IMR-90 (cell line): ENCODE measurements at regions of chr10 and their contacts with region 1.

Region 1: DNA sequence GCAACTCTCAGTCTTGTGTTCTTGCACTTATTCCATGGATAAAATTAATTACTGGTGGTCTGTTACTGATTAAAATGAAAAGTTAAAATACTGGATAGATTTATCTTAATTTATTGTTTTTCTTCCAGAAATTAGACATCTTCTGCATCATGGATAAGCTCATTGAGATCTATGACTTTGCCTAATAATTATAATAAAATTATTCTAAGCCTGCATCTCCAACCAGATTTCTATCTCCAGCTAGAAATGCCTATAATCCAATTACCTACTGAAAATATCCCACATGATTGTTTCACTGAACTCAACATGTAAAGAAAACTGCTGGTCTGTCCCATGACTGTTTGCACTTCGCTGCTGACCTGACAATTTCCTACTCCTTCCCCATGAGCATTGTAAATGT is 88.3 kb upstream of the ACBD5 start:
- DNase-seq: no peak
- ATAC-seq: no peak
- H3K4me3 ChIP-seq: no peak overlapping the region
- H3K27ac ChIP-seq: no peak overlapping the region
- H3K4me1 ChIP-seq: no peaks in the 10 kb centered on the region
- H3K27me3 ChIP-seq: no peaks in the 10 kb centered on the region
- CTCF ChIP-seq: no peak
- POLR2A ChIP-seq: no peak
- RAD21 ChIP-seq: no peak

Region 2: DNA sequence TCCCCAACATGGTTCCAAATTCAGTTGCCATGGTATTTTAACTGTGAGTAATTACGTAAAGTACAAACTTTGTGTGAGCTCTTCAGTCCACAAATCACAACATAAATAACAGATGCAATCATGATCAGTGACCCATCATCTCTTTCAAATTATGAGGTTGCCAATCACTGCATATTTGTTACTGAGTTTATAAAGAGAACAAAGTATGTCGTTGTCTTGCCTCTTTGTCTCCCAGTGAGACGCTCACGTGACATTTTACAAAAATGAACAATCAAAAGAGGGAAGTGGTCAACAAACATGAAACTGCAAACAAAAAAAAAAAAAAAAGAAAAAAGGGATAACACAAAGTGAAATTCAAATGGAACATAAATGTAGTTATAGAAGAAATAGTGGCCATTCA is 754.2 kb before region 1 on chr10:
- CTCF ChIA-PET with region 1: no interaction called
- POLR2A ChIA-PET with region 1: no interaction called
- dilution Hi-C with region 1: no loop called
- in situ Hi-C with region 1: no loop called
- intact Hi-C with region 1: loop called (anchors 5 kb)
- DNase-seq: no peak
- ATAC-seq: no peak
- H3K4me3 ChIP-seq: no peak overlapping the region
- H3K27ac ChIP-seq: no peak overlapping the region
- H3K4me1 ChIP-seq: no peaks in the 10 kb centered on the region
- H3K27me3 ChIP-seq: no peaks in the 10 kb centered on the region
- CTCF ChIP-seq: no peak
- POLR2A ChIP-seq: no peak
- RAD21 ChIP-seq: no peak

Region 3: DNA sequence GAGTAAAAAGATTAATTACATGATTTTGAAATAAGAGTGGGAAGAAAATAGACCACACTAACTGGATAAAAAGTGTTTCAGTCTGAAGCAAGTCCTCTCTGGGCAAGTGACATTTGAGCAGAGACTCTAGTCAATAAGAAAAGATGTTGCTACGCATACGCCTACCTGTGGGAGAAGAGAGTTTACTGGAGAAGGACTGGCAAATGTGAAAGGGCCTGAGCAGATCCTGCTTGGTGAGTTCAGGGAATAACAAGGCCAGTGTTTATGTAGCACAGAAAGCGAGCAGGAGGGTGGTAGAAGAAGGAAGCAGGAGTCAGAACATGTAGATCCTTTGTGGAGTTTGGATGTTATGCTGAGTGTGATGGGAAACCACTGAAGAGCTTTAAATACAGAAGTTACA is 218.5 kb after region 1 on chr10:
- CTCF ChIA-PET with region 1: no interaction called
- POLR2A ChIA-PET with region 1: no interaction called
- dilution Hi-C with region 1: no loop called
- in situ Hi-C with region 1: no loop called
- intact Hi-C with region 1: no loop called
- DNase-seq: no peak
- ATAC-seq: no peak
- H3K4me3 ChIP-seq: no peak overlapping the region
- H3K27ac ChIP-seq: no peak overlapping the region
- H3K4me1 ChIP-seq: peaks cover 2% of the 10 kb centered on the region
- H3K27me3 ChIP-seq: no peaks in the 10 kb centered on the region
- CTCF ChIP-seq: no peak
- POLR2A ChIP-seq: no peak
- RAD21 ChIP-seq: no peak